Panc1 (cell line): ENCODE measurements at regions of chr2 and their contacts with region 1.

Region 1: GRCh38 chr2:68838641-68839040 is 32.6 kb downstream of the BMP10 start:
- DNase-seq: no peak
- ATAC-seq: no peak
- H3K4me3 ChIP-seq: no peak overlapping the region
- H3K27ac ChIP-seq: no peak overlapping the region
- H3K4me1 ChIP-seq: no peaks in the 10 kb centered on the region
- H3K27me3 ChIP-seq: peaks cover 4% of the 10 kb centered on the region
- CTCF ChIP-seq: no peak

Region 2: DNA sequence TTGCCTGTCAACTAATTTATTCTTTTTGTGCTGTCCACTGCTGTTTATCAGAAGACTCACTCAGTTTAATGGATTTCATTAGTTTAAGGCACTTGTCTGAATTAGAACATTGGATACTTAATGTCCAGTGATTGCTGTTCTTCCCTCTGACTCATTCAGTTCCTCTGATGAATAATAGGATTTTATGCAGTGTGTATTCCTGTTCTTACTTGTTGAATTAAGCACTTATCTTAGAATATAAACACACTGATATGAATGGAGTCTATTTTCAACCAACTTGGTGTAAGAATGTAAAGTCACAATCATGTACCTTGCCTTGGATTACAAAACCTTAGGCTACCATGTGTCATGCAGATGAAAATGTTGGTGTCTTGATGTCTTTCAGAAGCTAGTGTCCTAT is 282.3 kb before region 1 on chr2:
- CTCF ChIA-PET with region 1: no interaction called
- POLR2A ChIA-PET with region 1: no interaction called
- in situ Hi-C with region 1: no loop called
- intact Hi-C with region 1: no loop called
- DNase-seq: no peak
- ATAC-seq: no peak
- H3K4me3 ChIP-seq: no peak overlapping the region
- H3K27ac ChIP-seq: no peak overlapping the region
- H3K4me1 ChIP-seq: no peaks in the 10 kb centered on the region
- H3K27me3 ChIP-seq: no peaks in the 10 kb centered on the region
- CTCF ChIP-seq: no peak

Region 3: DNA sequence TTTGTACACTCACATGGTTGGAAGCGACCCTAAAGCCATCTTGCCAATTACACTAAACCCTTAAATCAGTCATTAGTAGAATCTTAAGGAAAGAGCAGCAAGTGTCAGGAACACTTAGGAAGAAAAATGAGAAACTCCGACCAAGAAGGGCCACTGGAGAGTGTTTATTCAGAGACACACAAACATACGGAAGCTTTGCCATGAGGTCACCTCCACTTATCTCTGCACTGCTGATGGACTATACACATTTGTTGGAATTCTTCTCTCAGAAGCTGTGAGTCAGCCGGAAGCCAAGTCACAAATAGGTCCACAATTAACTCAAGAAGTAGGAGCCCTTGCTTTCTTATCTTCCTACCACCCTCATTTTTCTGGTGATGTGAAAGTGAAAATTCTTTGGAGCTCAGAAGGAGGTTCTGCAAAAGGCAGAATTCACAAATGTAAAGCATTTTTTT is 11.0 kb after region 1 on chr2:
- CTCF ChIA-PET with region 1: interaction called, 14 read pairs
- POLR2A ChIA-PET with region 1: no interaction called
- in situ Hi-C with region 1: no loop called
- intact Hi-C with region 1: no loop called
- DNase-seq: no peak
- ATAC-seq: no peak
- H3K4me3 ChIP-seq: no peak overlapping the region
- H3K27ac ChIP-seq: no peak overlapping the region
- H3K4me1 ChIP-seq: no peaks in the 10 kb centered on the region
- H3K27me3 ChIP-seq: peaks cover 21% of the 10 kb centered on the region
- CTCF ChIP-seq: no peak

Region 4: GRCh38 chr2:69514406-69514805 is 675.8 kb after region 1 on chr2:
- CTCF ChIA-PET with region 1: no interaction called
- POLR2A ChIA-PET with region 1: no interaction called
- in situ Hi-C with region 1: no loop called
- intact Hi-C with region 1: no loop called
- DNase-seq: no peak
- ATAC-seq: no peak
- H3K4me3 ChIP-seq: no peak overlapping the region
- H3K27ac ChIP-seq: no peak overlapping the region
- H3K4me1 ChIP-seq: no peaks in the 10 kb centered on the region
- H3K27me3 ChIP-seq: no peaks in the 10 kb centered on the region
- CTCF ChIP-seq: no peak